GM12878 (cell line): ENCODE measurements at regions of chr17 and their contacts with region 1.

Region 1: GRCh38 chr17:78421484-78422266 is 43.2 kb downstream of the PGS1 start:
- DNase-seq: peak; percentile 7
- ATAC-seq: peak; percentile 96
- H3K4me3 ChIP-seq: no peak overlapping the region
- H3K27ac ChIP-seq: no peak overlapping the region
- H3K4me1 ChIP-seq: no peaks in the 10 kb centered on the region; the same call in 1 of the 2 replicates
- H3K27me3 ChIP-seq: no peaks in the 10 kb centered on the region
- CTCF ChIP-seq: peak; percentile 95 to 99 (median 99); a peak in 5 of 6 replicates
- EP300 ChIP-seq: no peak
- POLR2A ChIP-seq: no peak
- RAD21 ChIP-seq: peak; percentile 92

Region 2: GRCh38 chr17:78089576-78090281 is 331.9 kb before region 1 on chr17:
- CTCF ChIA-PET with region 1: interaction called, 11 read pairs
- POLR2A ChIA-PET with region 1: no interaction called
- RAD21 ChIA-PET with region 1: interaction called, 8 read pairs
- SMC1A ChIA-PET with region 1: interaction called, 6 read pairs
- in situ Hi-C with region 1: no loop called
- intact Hi-C with region 1: loop called (anchors 10 kb)
- DNase-seq: no peak
- ATAC-seq: no peak
- H3K4me3 ChIP-seq: no peak overlapping the region
- H3K27ac ChIP-seq: no peak overlapping the region
- H3K4me1 ChIP-seq: no peaks in the 10 kb centered on the region
- H3K27me3 ChIP-seq: no peaks in the 10 kb centered on the region
- CTCF ChIP-seq: no peak
- EP300 ChIP-seq: no peak
- POLR2A ChIP-seq: no peak
- RAD21 ChIP-seq: no peak

Region 3: DNA sequence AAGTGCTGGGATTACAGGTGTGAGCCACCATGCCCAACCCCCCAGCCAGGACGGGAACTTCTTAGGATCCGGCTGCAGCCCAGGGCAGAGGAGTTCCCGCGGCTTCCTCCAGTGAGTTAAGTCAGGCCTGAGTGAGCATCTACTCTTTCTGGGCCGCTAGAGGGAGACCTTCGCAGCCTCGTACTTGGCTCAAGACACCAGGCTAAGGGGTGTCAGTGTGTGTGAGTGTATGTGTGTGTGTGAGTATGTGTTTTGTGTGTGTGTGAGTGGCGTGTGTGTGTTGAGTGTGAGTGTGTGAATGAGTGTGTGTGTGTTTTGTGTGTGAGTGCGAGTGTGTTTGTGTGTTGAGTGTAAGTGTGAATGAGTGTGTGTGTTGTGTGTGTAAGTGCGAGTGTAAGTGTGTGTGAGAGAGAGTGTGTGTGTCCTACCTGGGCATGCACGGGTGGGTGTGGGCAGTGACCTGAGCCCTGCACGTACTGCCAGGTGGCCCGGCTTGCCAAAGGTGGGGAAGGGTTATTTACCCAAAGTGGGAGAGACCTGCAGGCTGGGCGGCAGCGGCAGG is 131.8 kb before region 1 on chr17:
- CTCF ChIA-PET with region 1: interaction called, 18 read pairs
- POLR2A ChIA-PET with region 1: no interaction called
- RAD21 ChIA-PET with region 1: interaction called, 12 read pairs
- SMC1A ChIA-PET with region 1: interaction called, 21 read pairs
- in situ Hi-C with region 1: loop called (anchors 5 kb)
- intact Hi-C with region 1: loop called (anchors 1 kb)
- DNase-seq: peak; percentile 30
- ATAC-seq: peak; percentile 100
- H3K4me3 ChIP-seq: no peak overlapping the region
- H3K27ac ChIP-seq: no peak overlapping the region
- H3K4me1 ChIP-seq: peaks cover 8% of the 10 kb centered on the region
- H3K27me3 ChIP-seq: no peaks in the 10 kb centered on the region
- CTCF ChIP-seq: peak; percentile 88 to 92 (median 89)
- EP300 ChIP-seq: no peak
- POLR2A ChIP-seq: no peak
- RAD21 ChIP-seq: peak; percentile 91

Region 4: DNA sequence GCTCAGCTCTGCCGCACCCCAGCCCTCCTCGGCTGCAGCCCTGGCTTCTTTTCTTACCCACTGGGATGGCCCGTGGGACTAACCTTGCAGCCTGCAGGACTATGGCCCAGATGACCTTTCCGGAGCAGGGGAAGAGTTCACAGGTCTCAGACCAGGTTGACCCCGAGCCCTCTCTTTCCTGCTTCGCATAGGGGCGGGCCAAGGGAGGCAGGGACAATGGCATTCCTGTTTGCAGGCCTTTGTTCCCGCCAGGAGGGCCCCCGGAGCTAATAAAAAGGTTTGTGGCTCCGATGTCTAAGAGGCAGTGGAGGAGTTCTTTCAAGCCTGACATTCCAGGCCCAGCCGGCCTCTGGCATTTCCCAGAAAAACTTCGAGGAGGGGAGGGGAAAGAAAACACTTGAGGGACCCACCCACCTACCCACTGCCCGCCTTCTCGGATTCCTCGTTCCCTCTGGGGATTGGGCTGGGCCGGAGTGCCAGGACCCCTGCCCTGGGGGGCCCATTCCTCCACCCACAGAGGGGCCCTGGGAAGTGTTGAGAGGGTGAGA is 56.0 kb before region 1 on chr17:
- CTCF ChIA-PET with region 1: interaction called, 96 read pairs
- POLR2A ChIA-PET with region 1: interaction called, 7 read pairs
- RAD21 ChIA-PET with region 1: interaction called, 52 read pairs
- SMC1A ChIA-PET with region 1: interaction called, 26 read pairs
- in situ Hi-C with region 1: loop called (anchors 5 kb)
- intact Hi-C with region 1: loop called (anchors 1 kb)
- DNase-seq: no peak
- ATAC-seq: no peak
- H3K4me3 ChIP-seq: no peak overlapping the region
- H3K27ac ChIP-seq: no peak overlapping the region
- H3K4me1 ChIP-seq: peaks cover 23% of the 10 kb centered on the region
- H3K27me3 ChIP-seq: 0 out of 4 replicates have a peak, but pooled peaks cover 0 to 2% of the 10 kb centered on the region in 2 experiments
- CTCF ChIP-seq: no peak
- EP300 ChIP-seq: no peak
- POLR2A ChIP-seq: no peak
- RAD21 ChIP-seq: no peak

Region 5: GRCh38 chr17:78403822-78404221 is 17.9 kb before region 1 on chr17:
- CTCF ChIA-PET with region 1: no interaction called
- POLR2A ChIA-PET with region 1: no interaction called
- RAD21 ChIA-PET with region 1: no interaction called
- SMC1A ChIA-PET with region 1: no interaction called
- in situ Hi-C with region 1: no loop called
- intact Hi-C with region 1: no loop called
- DNase-seq: no peak
- ATAC-seq: no peak
- H3K4me3 ChIP-seq: no peak overlapping the region
- H3K27ac ChIP-seq: no peak overlapping the region
- H3K4me1 ChIP-seq: no peaks in the 10 kb centered on the region
- H3K27me3 ChIP-seq: no peaks in the 10 kb centered on the region
- CTCF ChIP-seq: no peak
- EP300 ChIP-seq: no peak
- POLR2A ChIP-seq: no peak
- RAD21 ChIP-seq: no peak